ENCODE measurements at regions of chr17 and their contacts with region 1.

Region 1: GRCh38 chr17:49548506-49549310 is 27.0 kb upstream of the NXPH3 start:
- DNase-seq: peak; percentile 78
- ATAC-seq: peak; percentile 75

Region 2: DNA sequence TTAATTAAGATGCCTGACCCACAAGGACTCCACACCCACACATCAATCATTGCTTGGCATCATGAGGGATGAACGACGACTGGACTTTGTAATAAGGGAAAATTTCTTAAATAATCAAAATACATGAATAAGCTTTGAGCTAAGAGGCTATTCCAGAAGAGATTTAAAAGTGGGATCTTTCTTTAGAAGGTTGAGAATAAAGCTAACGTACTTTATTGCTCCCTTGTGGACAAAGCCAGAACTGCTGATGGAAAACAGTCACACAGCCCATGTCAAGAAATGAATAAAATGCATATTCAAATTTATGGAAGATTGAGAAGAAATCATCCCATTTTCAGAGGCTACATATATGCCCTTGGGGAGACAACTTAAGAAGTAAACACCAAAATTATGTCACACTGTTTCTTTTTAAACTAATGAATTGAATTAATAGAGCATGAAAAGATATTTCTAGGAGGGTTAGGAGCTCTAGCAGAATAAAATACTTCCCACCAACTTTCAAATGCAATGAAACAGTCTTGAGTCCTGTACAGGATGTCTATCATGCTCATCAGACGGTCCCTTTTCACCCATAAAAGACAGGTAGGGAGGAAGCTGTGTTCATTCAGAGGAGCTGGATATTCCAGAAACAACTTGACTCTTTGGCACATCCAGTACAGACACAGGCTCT is 257.9 kb before region 1 on chr17:
- intact Hi-C with region 1: no loop called
- DNase-seq: no peak
- ATAC-seq: no peak

Region 3: GRCh38 chr17:49456183-49456965 is 92.3 kb before region 1 on chr17:
- intact Hi-C with region 1: loop called (anchors 5 kb)
- DNase-seq: no peak
- ATAC-seq: peak; percentile 40

Region 4: DNA sequence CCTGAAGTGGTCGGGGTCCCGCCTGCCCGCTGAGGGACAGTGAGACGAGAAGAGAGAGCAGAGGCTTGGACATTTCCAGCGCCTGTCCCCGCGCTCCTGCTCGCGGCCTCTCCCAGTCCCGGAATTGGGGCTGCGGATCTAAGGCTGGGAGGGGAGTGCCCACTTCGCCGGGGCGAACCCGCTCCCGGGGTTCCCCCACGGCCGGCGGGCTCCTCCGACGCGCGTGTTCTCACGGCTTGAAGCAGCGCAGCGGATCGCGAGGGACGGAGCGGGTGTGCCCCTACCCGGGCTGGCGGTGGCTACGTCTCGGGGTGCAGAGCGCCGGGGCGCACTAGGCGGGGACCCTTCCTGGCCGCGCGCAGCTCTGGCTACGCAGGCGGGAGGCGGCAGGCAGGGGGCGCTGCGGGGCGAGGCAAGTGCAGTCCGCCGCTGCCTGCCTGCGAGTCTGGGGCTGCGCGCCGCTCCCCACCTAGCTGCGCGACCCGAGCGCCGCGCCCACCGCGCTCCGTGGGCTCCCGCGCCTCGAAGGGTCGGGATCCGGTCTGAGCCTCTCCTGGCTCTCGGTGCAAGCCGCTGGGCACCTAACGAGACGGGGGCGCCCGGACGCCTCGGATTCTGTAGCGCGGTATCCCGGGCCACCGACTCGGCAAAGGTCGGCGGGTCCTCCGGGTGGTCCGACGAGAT is 52.4 kb before region 1 on chr17:
- intact Hi-C with region 1: loop called (anchors 10 kb)
- DNase-seq: peak; percentile 92
- ATAC-seq: peak; percentile 91

Region 5: GRCh38 chr17:49637050-49637449 is 88.3 kb after region 1 on chr17:
- intact Hi-C with region 1: no loop called
- DNase-seq: no peak
- ATAC-seq: no peak